Left cardiac atrium (tissue), 4 donors: ENCODE measurements at regions of chr6 and their contacts with region 1.

Region 1: GRCh38 chr6:163956571-163957407 is 542.3 kb downstream of the QKI start:
- DNase-seq: peak; percentile 84
- ATAC-seq: peak; percentile 88 to 92

Region 2: GRCh38 chr6:163427498-163428254 is 529.1 kb before region 1 on chr6:
- intact Hi-C with region 1: loop called in 1 of 2 experiments (anchors 10 kb)
- DNase-seq: no peak
- ATAC-seq: peak; percentile 48 to 51

Region 3: DNA sequence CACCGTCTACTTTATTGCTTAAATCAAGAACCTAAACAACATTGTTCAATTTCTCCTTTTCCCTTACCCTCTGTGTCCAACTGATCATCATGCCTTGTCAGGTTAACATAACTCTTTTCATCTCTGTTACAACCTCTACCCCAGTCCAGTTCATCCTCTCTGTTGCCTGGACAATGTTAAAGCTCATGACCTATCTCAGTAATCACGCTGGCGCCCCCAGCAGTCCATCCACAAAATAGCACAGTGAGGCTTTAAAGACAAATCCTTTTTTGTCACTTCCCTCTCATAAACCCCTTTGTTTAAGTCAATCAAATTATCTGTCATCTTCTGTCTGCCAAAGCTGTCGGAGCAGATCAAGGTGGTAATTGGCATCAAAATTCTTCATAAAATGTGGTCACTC is 402.1 kb before region 1 on chr6:
- intact Hi-C with region 1: no loop called
- DNase-seq: peak; percentile 35
- ATAC-seq: peak in 1 of 2 donors; percentile 54

Region 4: GRCh38 chr6:163585932-163586437 is 370.8 kb before region 1 on chr6:
- intact Hi-C with region 1: loop called in 1 of 2 experiments (anchors 10 kb)
- DNase-seq: peak; percentile 76
- ATAC-seq: peak; percentile 67 to 89